ENCODE measurements at regions of chrX and their contacts with region 1.

Region 1: GRCh38 chrX:136477026-136477425 is 10.7 kb upstream of the BRS3 start:
- DNase-seq: peak; percentile 17
- ATAC-seq: peak; percentile 47
- H3K4me3 Mint-ChIP-seq: no peak overlapping the region
- H3K27ac Mint-ChIP-seq: no peak overlapping the region
- H3K4me1 Mint-ChIP-seq: no peaks in the 10 kb centered on the region
- H3K27me3 Mint-ChIP-seq: no peaks in the 10 kb centered on the region

Region 2: GRCh38 chrX:136386826-136387225 is 90.2 kb before region 1 on chrX:
- CTCF ChIA-PET with region 1: no interaction called
- POLR2A ChIA-PET with region 1: no interaction called
- intact Hi-C with region 1: no loop called
- DNase-seq: no peak
- ATAC-seq: no peak
- H3K4me3 Mint-ChIP-seq: no peak overlapping the region
- H3K27ac Mint-ChIP-seq: no peak overlapping the region
- H3K4me1 Mint-ChIP-seq: no peaks in the 10 kb centered on the region
- H3K27me3 Mint-ChIP-seq: peaks cover 9% of the 10 kb centered on the region

Region 3: GRCh38 chrX:136397001-136397400 is 80.0 kb before region 1 on chrX:
- CTCF ChIA-PET with region 1: no interaction called
- POLR2A ChIA-PET with region 1: no interaction called
- intact Hi-C with region 1: loop called in 1 of 2 experiments (anchors 5 kb)
- DNase-seq: no peak
- ATAC-seq: no peak
- H3K4me3 Mint-ChIP-seq: no peak overlapping the region
- H3K27ac Mint-ChIP-seq: no peak overlapping the region
- H3K4me1 Mint-ChIP-seq: no peaks in the 10 kb centered on the region
- H3K27me3 Mint-ChIP-seq: no peaks in the 10 kb centered on the region

Region 4: DNA sequence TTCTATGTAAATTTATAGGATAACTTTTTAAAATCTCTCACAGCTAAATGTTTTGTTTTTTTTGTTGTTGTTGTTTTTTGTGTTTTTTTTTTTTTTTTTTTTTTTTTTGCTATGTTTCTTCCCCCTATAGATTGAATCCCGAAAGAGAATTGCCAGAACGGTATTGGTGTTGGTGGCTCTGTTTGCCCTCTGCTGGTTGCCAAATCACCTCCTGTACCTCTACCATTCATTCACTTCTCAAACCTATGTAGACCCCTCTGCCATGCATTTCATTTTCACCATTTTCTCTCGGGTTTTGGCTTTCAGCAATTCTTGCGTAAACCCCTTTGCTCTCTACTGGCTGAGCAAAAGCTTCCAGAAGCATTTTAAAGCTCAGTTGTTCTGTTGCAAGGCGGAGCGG is 14.8 kb after region 1 on chrX:
- CTCF ChIA-PET with region 1: no interaction called
- POLR2A ChIA-PET with region 1: no interaction called
- intact Hi-C with region 1: no loop called
- DNase-seq: no peak
- ATAC-seq: no peak
- H3K4me3 Mint-ChIP-seq: no peak overlapping the region
- H3K27ac Mint-ChIP-seq: no peak overlapping the region
- H3K4me1 Mint-ChIP-seq: peaks cover 4% of the 10 kb centered on the region
- H3K27me3 Mint-ChIP-seq: peaks cover 12% of the 10 kb centered on the region